AG04449 (cell line): ENCODE measurements at regions of chr2 and their contacts with region 1.

Region 1: DNA sequence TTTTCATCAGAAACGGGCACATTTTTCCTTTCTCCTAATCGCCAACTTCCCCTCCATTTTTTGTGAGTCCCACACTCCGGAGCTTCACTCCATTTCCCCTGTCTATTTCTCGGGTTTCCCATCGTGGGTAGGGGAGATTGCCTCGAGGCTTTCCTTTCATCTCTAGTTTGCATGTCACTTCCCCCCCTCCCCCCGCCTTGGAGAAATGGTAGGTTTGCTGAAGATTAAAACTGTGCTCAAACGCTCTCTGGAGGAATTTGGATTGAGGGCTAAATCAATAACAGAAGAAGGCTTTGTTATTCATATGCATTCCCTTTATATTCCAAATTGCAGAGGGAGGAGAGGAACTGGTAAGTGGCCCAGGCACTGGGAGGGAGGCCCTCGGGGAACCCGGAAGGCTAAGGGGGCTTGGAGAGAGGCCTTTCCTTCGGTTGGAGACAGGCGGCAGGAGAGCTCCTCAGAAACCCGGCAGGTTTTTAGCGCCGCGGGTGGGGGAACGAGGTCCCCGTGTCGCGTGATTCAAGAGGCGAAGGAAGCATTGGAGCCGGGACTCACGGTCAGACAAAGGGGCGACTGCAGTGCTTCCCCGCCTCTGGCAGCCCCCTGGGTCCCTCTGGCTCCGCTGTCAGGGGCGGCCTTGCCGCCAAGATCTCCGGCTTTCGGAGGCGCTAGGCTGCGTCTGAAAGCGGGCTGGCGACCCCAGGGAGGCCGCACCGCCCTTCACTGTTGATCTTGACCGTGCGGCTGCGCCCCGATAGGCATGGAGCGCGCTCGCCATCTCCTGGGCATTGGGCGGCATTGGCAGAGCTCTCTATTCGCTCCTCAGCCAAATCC is 2.4 kb upstream of the HOXD12 start:
- DNase-seq: no peak
- H3K4me3 ChIP-seq: peak overlapping the region; percentile 45
- CTCF ChIP-seq: peak; percentile 91

Region 2: GRCh38 chr2:175251425-175252041 is 845.7 kb before region 1 on chr2:
- CTCF ChIA-PET with region 1: interaction called, 93 read pairs
- POLR2A ChIA-PET with region 1: no interaction called
- DNase-seq: no peak
- H3K4me3 ChIP-seq: no peak overlapping the region
- CTCF ChIP-seq: peak; percentile 60

Region 3: GRCh38 chr2:175414882-175415487 is 682.2 kb before region 1 on chr2:
- CTCF ChIA-PET with region 1: interaction called, 17 read pairs
- POLR2A ChIA-PET with region 1: no interaction called
- DNase-seq: peak; percentile 16
- H3K4me3 ChIP-seq: no peak overlapping the region
- CTCF ChIP-seq: peak; percentile 65

Region 4: DNA sequence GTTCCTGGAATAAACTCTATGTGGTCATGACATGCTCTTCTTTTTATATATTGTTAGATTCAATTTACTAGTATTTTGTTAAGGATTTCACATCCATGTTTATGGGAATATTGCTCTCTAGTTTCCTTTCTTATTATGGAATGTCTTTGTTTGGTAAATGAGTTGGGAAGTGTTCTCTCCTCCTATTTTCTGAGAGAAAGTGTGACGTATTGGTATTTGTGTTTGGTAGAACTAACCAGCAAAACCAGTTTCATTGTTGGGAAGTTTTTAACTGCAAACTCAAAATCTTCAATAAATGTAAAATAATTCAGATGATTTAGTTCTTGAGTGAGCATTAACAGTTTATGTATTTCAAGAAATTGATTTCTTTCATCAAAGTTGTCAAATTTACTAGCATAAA is 83.8 kb before region 1 on chr2:
- CTCF ChIA-PET with region 1: no interaction called
- POLR2A ChIA-PET with region 1: no interaction called
- DNase-seq: no peak
- H3K4me3 ChIP-seq: no peak overlapping the region
- CTCF ChIP-seq: no peak

Region 5: DNA sequence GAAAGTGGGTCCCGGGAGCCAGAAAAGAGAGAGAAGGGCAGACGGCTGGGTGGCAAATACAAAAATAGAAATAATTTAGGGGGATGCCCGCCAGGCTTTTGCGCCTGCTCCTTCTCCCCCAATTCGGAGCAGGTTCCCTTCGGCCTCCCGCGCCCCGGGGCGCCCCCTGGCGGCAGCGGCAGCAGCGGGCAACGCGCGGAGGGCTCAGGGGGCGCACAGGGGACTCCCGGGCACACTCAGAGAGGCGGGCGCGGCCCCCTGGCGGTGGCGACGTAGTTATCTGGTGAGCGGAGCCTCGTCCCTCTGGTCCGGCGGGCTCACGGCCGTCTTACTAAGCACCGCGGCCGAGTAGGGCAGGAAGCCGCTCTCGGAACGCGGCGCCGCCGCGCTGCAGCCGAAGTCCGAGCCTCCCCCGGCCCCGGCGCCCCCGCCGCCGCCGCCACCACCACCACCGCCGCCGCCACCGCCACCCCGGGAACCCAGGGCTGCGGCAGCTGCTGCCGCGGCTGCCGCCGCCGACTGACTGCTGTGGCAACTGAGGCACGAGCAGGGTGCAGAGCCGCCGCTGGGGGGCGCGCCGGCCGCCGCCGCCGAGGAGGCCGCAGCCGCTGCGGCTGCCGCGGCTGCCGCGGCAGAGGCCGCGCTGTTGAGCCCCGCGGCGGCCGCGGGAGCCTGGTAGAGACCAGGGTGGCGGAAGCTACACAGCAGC is 17.2 kb before region 1 on chr2:
- CTCF ChIA-PET with region 1: interaction called, 47 read pairs
- POLR2A ChIA-PET with region 1: no interaction called
- DNase-seq: no peak
- H3K4me3 ChIP-seq: no peak overlapping the region
- CTCF ChIP-seq: peak; percentile 72